Calu3 (cell line): ENCODE measurements at regions of chr10 and their contacts with region 1.

Region 1: DNA sequence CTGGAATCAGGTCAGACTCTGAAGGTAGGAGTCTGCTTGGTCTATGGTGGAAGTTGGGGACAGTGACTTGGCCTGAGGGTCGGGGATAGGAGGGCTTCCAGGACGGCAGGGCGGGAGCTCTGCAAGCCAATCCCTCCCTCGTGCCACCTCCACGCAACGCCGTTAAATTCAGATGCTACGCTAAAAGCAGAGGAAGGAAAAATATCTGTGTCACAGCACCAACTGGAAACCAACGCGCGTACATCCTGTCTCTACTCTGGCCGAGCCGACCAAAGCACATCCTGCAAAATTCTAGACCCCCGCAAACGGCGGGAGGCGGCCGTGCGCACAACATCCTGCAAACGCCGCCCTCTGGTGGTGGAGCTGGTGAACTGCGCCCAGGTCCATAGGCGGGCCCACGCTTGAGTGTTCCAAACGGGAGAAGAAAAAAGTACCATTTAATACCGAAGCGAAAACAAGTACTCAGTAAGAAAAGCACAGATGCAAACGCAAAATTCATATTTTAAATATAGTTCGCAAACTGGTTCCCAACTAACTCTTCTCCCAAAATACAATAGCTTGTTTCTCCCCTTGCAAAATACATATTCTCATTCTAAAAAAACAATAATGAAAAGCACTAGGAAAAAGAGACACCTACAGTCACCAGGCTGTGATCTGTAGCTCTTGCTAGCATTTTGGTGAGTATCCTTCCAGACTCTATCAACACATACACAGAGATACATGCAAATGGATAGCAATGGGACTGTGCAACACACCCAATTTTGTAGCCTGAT is 45.7 kb upstream of the HSPA12A start:
- DNase-seq: peak; percentile 73
- H3K4me3 Mint-ChIP-seq: peak overlapping the region; percentile 44
- H3K27ac Mint-ChIP-seq: no peak overlapping the region
- H3K4me1 Mint-ChIP-seq: no peaks in the 10 kb centered on the region
- H3K27me3 Mint-ChIP-seq: peaks cover 12% of the 10 kb centered on the region
- CTCF ChIP-seq: peak; percentile 93

Region 2: GRCh38 chr10:116627386-116627933 is 160.6 kb before region 1 on chr10:
- CTCF ChIA-PET with region 1: interaction called, 12 read pairs
- intact Hi-C with region 1: loop called (anchors 1 kb)
- DNase-seq: peak; percentile 63
- H3K4me3 Mint-ChIP-seq: no peak overlapping the region
- H3K27ac Mint-ChIP-seq: no peak overlapping the region
- H3K4me1 Mint-ChIP-seq: no peaks in the 10 kb centered on the region
- H3K27me3 Mint-ChIP-seq: peaks cover 46% of the 10 kb centered on the region
- CTCF ChIP-seq: peak; percentile 27

Region 3: GRCh38 chr10:116687633-116688032 is 100.4 kb before region 1 on chr10:
- CTCF ChIA-PET with region 1: interaction called, 13 read pairs
- intact Hi-C with region 1: loop called (anchors 1 kb)
- DNase-seq: no peak
- H3K4me3 Mint-ChIP-seq: no peak overlapping the region
- H3K27ac Mint-ChIP-seq: no peak overlapping the region
- H3K4me1 Mint-ChIP-seq: no peaks in the 10 kb centered on the region
- H3K27me3 Mint-ChIP-seq: peaks cover 16% of the 10 kb centered on the region
- CTCF ChIP-seq: no peak

Region 4: DNA sequence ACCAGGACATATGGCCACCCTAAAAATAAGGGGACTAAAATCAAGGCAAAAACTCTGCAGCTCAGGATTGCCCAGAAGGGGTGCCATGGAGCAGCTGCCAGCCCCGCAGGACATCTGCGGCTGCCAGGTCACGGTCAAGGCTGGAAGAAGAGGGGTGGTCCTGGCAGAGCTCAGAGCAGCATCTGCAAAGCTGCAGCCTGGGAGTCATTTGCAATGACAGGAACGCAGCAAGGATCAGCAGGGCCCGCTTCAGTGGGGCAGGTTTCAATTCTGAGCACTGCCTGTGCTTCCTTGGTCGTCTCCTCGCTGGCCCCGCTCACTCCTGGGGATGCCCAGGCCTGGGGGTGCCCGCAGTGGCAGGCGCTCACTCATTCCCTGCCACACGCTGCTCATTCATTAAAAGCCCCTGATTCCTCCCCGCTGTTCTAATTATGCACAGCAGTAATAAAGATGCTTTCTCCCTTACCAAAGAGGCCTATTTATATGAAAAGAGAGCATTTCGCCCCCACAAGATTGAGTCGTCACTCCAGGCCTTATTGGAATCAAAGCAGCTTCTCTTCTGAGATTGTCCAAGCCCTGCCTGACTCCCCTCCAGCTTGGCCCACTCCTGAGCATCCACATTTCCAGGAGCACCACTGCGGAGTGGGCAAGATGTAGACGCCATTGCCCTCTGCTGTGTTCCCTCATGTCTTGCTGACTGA is 50.3 kb before region 1 on chr10:
- CTCF ChIA-PET with region 1: no interaction called
- intact Hi-C with region 1: no loop called
- DNase-seq: no peak
- H3K4me3 Mint-ChIP-seq: no peak overlapping the region
- H3K27ac Mint-ChIP-seq: no peak overlapping the region
- H3K4me1 Mint-ChIP-seq: no peaks in the 10 kb centered on the region
- H3K27me3 Mint-ChIP-seq: peaks cover 32% of the 10 kb centered on the region
- CTCF ChIP-seq: no peak

Region 5: DNA sequence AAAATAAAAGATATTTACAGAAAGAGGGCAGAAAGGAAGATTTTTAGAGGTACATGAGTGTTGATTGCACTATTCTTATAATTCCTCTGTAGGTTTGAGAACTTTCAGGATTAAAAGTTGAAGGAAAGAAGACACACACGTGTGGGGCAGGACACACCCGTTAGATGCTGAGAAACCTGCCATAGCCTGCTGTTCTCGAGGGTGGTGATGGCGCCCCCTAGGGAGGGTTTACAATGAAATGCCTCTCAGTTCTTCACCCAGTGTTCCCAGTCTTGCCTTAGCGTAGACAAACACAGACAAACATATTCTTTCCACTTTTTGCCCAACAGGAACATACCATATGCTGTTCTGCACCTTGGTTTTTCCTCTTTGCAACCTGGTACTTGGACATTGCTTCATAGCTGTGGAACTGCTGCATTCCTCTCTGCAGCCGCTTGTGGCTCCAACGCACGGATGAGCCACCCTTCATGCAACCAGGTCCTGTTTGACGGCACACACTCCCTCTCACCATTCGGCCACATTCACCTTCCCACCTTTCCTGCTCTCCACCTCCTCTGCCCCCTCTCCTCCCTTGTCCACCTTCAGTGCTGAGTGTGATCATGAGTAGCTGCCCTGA is 22.4 kb before region 1 on chr10:
- CTCF ChIA-PET with region 1: no interaction called
- intact Hi-C with region 1: no loop called
- DNase-seq: peak; percentile 32
- H3K4me3 Mint-ChIP-seq: no peak overlapping the region
- H3K27ac Mint-ChIP-seq: no peak overlapping the region
- H3K4me1 Mint-ChIP-seq: no peaks in the 10 kb centered on the region
- H3K27me3 Mint-ChIP-seq: peaks cover 21% of the 10 kb centered on the region
- CTCF ChIP-seq: peak; percentile 35

Region 6: GRCh38 chr10:117126034-117126433 is 338.0 kb after region 1 on chr10:
- CTCF ChIA-PET with region 1: no interaction called
- intact Hi-C with region 1: no loop called
- DNase-seq: no peak
- H3K4me3 Mint-ChIP-seq: no peak overlapping the region
- H3K27ac Mint-ChIP-seq: no peak overlapping the region
- H3K4me1 Mint-ChIP-seq: peaks cover 4% of the 10 kb centered on the region
- H3K27me3 Mint-ChIP-seq: peaks cover 53% of the 10 kb centered on the region
- CTCF ChIP-seq: no peak